Activated CD8-positive, alpha-beta memory T cell treated with anti-CD3 and anti-CD28 coated beads, Interleukin-2, amount 10 ng/mL, durations not matched to agents 7 days and 5 days (primary cell): ENCODE measurements at regions of chr6 and their contacts with region 1.

Region 1: GRCh38 chr6:136792410-136793262 is at the start of gene MAP3K5:
- DNase-seq: peak; percentile 96
- ATAC-seq: peak; percentile 80
- H3K4me3 Mint-ChIP-seq: peak within 1 kb of the TSS; percentile 94
- H3K27ac Mint-ChIP-seq: peak within 1 kb of the TSS; percentile 92
- H3K4me1 Mint-ChIP-seq: peaks cover 32% of the 10 kb centered on the region
- H3K27me3 Mint-ChIP-seq: no peaks in the 10 kb centered on the region
- total RNA-seq, gene MAP3K5: 18.3 to 21.7 TPM

Region 2: DNA sequence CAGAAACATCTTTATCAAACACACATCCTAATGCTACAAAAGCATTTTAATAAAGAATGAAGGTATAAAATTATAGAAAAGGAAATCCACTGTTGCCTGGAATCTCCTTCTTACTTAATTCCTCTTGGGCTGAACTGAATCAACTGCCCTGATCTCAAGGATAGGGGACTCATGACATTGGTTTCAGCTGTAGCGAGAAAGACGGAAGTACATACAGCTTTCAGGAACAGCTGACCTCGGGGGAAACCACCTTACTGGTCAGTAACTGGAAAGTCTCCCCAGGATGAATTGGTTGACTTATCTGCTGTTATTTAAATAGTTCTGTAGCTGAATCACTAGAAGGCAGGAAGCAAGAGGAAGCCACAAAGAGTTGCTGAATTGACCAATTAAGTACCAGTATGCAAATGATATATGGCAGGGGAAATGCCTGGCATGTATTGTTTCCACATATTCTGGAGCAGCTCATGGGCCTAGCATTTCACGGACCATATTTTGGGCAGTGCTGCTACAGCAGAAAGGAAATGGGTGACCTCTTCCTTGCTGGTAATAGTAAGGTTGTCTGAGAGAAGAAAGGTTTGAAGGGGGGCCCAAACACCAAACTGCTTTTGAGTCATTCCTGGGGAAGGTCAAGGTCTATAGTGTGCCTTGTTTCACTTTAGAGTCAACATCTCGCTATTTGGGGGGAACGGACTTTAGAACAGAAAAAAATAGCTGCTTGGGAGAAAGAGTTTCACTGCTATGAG is 198.7 kb before region 1 on chr6:
- CTCF ChIA-PET with region 1: interaction called, 16 read pairs
- DNase-seq: peak; percentile 81
- ATAC-seq: peak; percentile 92
- H3K4me3 Mint-ChIP-seq: peak overlapping the region; percentile 66
- H3K27ac Mint-ChIP-seq: peak overlapping the region; percentile 91
- H3K4me1 Mint-ChIP-seq: peaks cover 29% of the 10 kb centered on the region
- H3K27me3 Mint-ChIP-seq: no peaks in the 10 kb centered on the region

Region 3: GRCh38 chr6:136635615-136636014 is 157.0 kb before region 1 on chr6:
- CTCF ChIA-PET with region 1: interaction called, 424 read pairs
- DNase-seq: no peak
- ATAC-seq: no peak
- H3K4me3 Mint-ChIP-seq: no peak overlapping the region
- H3K27ac Mint-ChIP-seq: no peak overlapping the region
- H3K4me1 Mint-ChIP-seq: peaks cover 10% of the 10 kb centered on the region
- H3K27me3 Mint-ChIP-seq: no peaks in the 10 kb centered on the region

Region 4: GRCh38 chr6:136719280-136720044 is 73.2 kb before region 1 on chr6:
- CTCF ChIA-PET with region 1: interaction called, 13 read pairs
- DNase-seq: no peak
- ATAC-seq: no peak
- H3K4me3 Mint-ChIP-seq: no peak overlapping the region
- H3K27ac Mint-ChIP-seq: peak overlapping the region; percentile 63
- H3K4me1 Mint-ChIP-seq: peaks cover 42% of the 10 kb centered on the region
- H3K27me3 Mint-ChIP-seq: no peaks in the 10 kb centered on the region

Region 5: GRCh38 chr6:136761227-136761922 is 31.3 kb before region 1 on chr6:
- CTCF ChIA-PET with region 1: interaction called, 102 read pairs
- DNase-seq: peak; percentile 66
- ATAC-seq: peak; percentile 72
- H3K4me3 Mint-ChIP-seq: peak overlapping the region; percentile 68
- H3K27ac Mint-ChIP-seq: peak overlapping the region; percentile 81
- H3K4me1 Mint-ChIP-seq: peaks cover 64% of the 10 kb centered on the region
- H3K27me3 Mint-ChIP-seq: no peaks in the 10 kb centered on the region

Region 6: DNA sequence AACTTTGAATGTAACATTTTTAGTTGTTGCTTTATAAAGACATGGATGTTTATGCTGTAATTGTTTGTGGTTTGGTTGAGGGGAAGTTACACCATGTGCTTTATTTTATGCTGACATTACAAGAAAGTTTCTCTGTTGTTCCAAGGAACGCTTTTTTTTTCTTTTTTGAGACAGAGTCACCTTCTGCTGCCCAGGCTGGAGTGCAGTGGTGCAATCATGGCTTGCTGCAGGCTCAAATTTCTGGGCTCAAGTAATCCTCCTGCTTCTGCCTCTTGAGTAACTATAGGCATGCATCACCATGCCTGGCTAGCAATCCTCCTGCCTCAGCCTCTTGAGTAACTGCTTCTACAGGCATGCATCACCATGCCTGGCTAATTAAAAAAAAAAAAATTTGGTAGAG is 447.5 kb after region 1 on chr6:
- CTCF ChIA-PET with region 1: no interaction called
- DNase-seq: no peak
- ATAC-seq: no peak
- H3K4me3 Mint-ChIP-seq: no peak overlapping the region
- H3K27ac Mint-ChIP-seq: no peak overlapping the region
- H3K4me1 Mint-ChIP-seq: peaks cover 4% of the 10 kb centered on the region
- H3K27me3 Mint-ChIP-seq: no peaks in the 10 kb centered on the region